ENCODE measurements at regions of chr22 and their contacts with region 1.

Region 1: DNA sequence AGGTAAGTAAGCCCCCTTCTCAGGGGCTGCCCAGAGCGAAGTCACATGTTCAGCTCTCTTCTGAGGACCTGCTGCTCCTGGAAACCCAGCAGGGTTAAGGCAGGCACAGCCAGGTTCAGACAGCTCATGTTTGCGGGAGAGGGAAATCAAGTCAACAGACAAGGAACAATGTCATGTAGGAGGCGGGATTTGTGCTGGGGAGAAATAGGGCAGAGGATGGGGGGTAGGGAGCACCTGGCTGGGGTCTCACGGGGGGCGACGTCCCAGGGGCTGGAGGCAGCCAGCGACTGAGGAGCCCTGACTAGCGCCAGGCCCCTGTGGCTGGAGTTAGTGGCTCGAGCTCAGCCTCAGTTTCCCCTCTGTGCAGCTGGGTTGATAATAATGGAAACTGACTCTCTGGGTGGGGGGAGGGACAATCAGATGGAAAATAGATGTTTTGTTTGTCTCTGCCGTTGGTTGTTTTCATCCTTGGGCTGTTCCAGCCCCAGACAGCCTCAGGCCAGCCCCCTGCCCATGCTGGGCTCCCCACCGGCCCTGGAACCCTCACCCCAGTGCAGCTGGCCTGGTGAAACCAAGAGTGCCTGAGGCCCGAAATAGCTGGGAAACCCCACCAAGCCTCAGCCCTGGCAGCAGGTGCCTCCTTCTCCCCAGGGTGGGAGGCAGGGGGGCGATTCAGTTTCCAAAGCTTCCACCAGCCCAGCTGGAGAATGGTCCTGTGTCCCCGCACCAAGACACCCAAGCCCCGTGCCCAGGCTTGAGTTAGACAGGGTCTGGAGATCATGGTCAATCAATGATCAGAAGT is 44.1 kb downstream of the IGLL5 start:
- DNase-seq: no peak
- H3K4me3 ChIP-seq: no peak overlapping the region
- H3K4me3 Mint-ChIP-seq: no peak overlapping the region
- H3K27ac ChIP-seq: no peak overlapping the region
- H3K27ac Mint-ChIP-seq: peak overlapping the region in 3 of 8 donors; percentile 29 to 67 (median 65)
- H3K4me1 ChIP-seq: peaks cover 11% of the 10 kb centered on the region
- H3K4me1 Mint-ChIP-seq: peaks cover 7 to 32% (median 17%) of the 10 kb centered on the region in 3 donors
- H3K27me3 ChIP-seq: no peaks in the 10 kb centered on the region
- H3K27me3 Mint-ChIP-seq: peaks cover 0 to 2% of the 10 kb centered on the region in 2 donors

Region 2: DNA sequence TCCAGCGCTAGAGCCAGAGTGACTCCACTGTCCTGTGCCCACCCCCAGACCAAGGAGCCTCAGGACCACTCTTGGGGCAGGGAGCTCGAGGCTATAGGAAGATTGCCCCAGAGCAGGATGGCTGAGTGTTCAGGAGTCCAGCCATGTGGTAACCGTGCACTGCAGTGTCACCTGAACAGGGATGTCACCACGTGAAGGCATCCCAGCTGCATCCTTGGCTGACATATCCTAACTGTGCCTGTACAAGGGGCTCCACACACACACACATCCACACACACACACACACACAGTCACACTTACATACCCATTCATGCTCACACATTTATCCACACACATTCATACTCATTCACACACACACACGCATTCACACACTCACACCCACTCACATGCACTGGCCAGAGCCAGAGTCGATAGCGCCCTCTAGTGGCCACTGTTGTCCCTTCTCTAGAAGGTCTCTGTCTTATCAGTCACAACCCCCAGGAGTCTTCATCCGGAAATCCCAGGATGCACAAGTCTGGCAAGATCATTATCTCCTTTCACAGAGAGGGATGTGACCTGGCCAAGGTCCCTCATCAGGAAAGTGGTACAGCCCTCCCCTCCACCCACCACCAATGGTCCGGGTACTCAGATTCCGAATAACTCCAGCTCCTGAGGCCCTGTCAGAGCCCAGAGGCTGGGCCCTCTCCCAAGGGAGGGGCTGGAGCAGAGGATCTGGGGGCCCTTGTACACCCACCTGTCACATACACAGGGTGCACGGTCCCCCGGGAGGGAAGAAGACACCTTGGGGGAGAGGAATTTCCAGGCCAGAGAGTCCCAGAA is 11.1 kb after region 1 on chr22:
- CTCF ChIA-PET with region 1: interaction called, 10 read pairs
- POLR2A ChIA-PET with region 1: no interaction called
- DNase-seq: peak; percentile 34 to 84 (median 70)
- H3K4me3 ChIP-seq: no peak overlapping the region
- H3K4me3 Mint-ChIP-seq: no peak overlapping the region
- H3K27ac ChIP-seq: no peak overlapping the region
- H3K27ac Mint-ChIP-seq: peak overlapping the region in 3 of 8 donors; percentile 14 to 77 (median 30)
- H3K4me1 ChIP-seq: no peaks in the 10 kb centered on the region
- H3K4me1 Mint-ChIP-seq: peaks cover 2 to 11% (median 5%) of the 10 kb centered on the region in 3 donors
- H3K27me3 ChIP-seq: no peaks in the 10 kb centered on the region
- H3K27me3 Mint-ChIP-seq: no peaks in the 10 kb centered on the region